ENCODE measurements at regions of chr7 and their contacts with region 1.

Region 1: DNA sequence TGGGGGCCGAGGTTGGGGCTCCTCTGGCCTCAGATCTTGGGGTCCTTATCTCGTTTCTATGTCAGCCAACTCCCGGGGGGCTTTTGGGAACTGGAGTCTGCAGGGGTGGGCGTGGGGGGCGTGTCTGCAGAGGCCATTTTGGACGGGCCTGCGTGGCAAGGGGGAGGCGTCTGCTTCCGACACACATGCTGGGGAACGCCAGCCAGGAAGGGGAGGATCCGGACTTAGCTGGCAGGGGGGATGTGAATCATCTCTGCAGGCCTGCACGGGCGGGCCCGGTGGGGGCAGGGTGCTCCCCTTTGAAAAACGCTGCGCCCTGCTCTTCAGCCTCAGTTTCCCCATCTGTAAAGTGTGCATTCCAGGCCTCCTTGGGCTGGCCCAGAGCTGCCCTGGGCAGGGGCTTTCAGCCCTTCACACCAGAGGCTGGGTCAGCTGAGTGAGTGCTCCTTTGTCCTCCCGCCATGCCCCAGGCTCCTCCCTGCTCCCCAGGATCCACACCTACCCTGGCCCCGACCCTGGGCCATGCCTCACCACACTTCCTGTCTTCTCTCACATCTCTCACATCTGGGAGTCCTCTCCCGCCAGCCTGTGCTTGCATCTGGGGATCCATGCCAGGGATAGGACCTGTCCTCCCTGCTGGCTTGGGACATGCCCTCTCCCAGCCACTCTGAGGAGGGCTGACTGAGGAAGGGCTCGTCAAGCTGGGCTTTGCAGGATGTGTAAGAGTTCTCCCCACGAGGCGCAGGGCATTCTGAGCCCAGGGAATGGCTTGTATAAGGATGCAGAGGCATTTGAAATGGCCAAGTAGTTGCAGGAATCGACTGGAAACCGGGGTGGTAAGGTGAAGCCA is 172.6 kb upstream of the TNRC18 start:
- DNase-seq: peak; percentile 93
- H3K4me3 Mint-ChIP-seq: peak overlapping the region; percentile 67
- H3K27ac Mint-ChIP-seq: peak overlapping the region; percentile 72
- H3K4me1 Mint-ChIP-seq: peaks cover 22% of the 10 kb centered on the region
- H3K27me3 Mint-ChIP-seq: peaks cover 20% of the 10 kb centered on the region

Region 2: GRCh38 chr7:4549681-4550080 is 1046.6 kb before region 1 on chr7:
- CTCF ChIA-PET with region 1: no interaction called
- intact Hi-C with region 1: no loop called
- DNase-seq: no peak
- H3K4me3 Mint-ChIP-seq: no peak overlapping the region
- H3K27ac Mint-ChIP-seq: no peak overlapping the region
- H3K4me1 Mint-ChIP-seq: no peaks in the 10 kb centered on the region
- H3K27me3 Mint-ChIP-seq: peaks cover 5% of the 10 kb centered on the region

Region 3: DNA sequence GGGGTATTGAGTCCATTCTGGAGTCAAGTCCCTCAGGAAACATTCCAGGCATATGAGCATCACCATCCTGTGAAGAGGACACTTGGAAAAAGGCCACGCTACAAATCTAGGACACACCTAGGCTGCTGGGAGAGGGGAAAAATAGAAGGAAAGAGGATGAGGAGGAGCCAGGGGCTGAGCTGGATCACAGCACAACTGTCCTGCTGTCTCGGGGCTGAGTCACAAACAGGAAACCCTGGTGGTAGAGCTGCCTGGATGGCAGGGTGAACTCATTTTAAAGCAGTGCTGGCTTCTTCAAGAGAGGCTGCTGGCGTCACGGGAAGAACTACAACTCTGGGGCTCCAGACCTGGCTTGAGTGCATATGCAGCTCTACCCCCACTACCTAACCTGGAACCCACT is 33.7 kb after region 1 on chr7:
- CTCF ChIA-PET with region 1: no interaction called
- intact Hi-C with region 1: loop called (anchors 2 kb)
- DNase-seq: peak; percentile 70
- H3K4me3 Mint-ChIP-seq: no peak overlapping the region
- H3K27ac Mint-ChIP-seq: peak overlapping the region; percentile 38
- H3K4me1 Mint-ChIP-seq: peaks cover 33% of the 10 kb centered on the region
- H3K27me3 Mint-ChIP-seq: no peaks in the 10 kb centered on the region

Region 4: GRCh38 chr7:5755704-5756504 is 159.6 kb after region 1 on chr7:
- CTCF ChIA-PET with region 1: no interaction called
- intact Hi-C with region 1: no loop called
- DNase-seq: no peak
- H3K4me3 Mint-ChIP-seq: no peak overlapping the region
- H3K27ac Mint-ChIP-seq: no peak overlapping the region
- H3K4me1 Mint-ChIP-seq: peaks cover 13% of the 10 kb centered on the region
- H3K27me3 Mint-ChIP-seq: no peaks in the 10 kb centered on the region

Measured in activated naive CD4-positive, alpha-beta T cell treated with anti-CD3 and anti-CD28 coated beads for 36 hours (primary cell).